B cell (primary cell): ENCODE measurements at regions of chr2 and their contacts with region 1.

Region 1: DNA sequence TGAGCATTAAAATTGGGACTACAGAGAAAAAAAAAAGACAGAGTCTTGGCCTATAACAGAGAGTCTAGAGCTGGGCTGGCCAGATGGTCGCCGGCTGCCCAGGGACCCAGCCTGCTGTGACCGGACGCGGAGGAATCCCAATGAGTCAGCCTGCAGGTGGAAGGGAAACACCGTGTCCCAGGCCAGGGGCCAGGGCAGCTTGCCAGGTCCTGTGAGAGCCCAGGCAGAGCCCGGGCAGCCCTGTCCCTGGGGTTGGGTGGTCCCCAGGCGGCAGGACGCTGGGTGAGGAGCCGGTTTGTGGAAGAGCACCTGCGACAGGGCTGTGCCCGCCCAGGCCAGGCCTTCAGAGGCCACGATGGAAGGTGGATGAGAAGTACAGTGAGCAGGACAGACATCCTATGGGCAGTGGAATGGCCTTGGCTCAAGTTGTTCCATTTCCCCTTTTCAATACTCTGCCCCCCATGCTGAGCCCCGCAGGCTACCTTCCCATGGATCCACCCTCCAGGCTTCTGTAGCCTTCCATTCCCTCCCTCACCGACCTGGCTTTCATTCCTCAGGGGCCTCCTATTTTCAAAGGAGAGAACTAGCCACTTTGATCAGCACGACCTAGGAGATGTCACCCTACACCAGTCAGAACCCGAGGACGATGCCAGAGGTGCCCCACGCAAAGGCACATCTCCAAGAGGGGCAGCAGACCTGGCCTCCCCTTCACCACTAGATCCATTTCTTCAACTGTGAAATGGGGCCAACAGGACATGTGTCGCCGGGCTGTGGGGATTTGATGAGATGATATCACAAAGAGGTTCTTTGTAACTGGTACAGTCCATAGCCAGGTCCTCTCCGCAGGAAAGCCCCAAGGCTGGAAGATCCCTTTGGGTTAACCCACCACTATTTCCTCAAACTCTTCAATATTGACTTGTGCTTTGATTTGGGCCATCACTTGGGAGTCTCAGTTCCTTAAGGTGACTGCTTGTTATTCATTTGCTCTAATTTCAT is 87.5 kb downstream of the POLR1A start:
- DNase-seq: peak; percentile 37
- ATAC-seq: no peak
- H3K4me3 ChIP-seq: no peak overlapping the region
- H3K4me3 Mint-ChIP-seq: peak overlapping the region; percentile 29
- H3K27ac ChIP-seq: peak overlapping the region; percentile 80 to 87
- H3K27ac Mint-ChIP-seq: peak overlapping the region; percentile 92
- H3K4me1 ChIP-seq: peaks cover 49 to 53% of the 10 kb centered on the region in 2 donors
- H3K4me1 Mint-ChIP-seq: peaks cover 69% of the 10 kb centered on the region
- H3K27me3 ChIP-seq: no peaks in the 10 kb centered on the region
- H3K27me3 Mint-ChIP-seq: no peaks in the 10 kb centered on the region
- CTCF ChIP-seq: no peak

Region 2: DNA sequence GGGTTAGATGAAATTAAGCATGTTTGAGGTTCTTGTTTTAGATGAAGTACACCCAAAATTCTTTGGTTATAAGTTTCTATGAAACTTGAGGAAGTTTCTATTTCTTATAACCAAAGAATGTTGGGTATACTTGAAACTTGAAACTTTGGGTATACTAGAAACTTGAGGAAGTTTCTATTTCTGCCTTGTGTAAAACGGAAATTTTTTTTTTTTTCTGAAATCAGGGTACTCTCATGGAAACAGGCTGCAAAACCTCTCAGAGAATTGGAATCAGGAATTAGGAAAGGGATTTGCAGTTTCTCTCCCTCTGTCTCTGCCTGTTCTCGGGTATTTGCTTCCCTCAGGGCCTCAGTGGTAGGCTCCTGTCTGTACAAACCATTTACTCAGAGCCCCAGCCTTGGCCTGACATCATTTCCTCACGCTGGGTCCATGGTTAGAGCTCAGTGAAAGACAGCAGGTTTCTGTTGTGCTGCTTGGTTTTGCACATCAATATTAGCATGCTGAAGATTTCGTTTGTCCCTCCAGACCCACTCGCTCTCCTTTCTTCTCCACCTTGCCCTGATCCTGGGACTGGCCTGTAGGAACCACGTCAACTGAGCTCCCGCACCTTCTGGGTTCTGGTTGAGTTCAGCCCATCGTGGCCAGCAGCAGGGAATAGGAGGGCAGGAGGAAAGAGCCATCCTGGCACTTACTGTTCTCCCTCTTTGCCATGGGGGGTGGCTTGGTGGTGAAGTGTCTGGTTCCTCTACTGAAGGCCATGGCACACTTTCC is 19.0 kb before region 1 on chr2:
- CTCF ChIA-PET with region 1: interaction called, 3 read pairs
- POLR2A ChIA-PET with region 1: interaction called, 6 read pairs
- intact Hi-C with region 1: loop called (anchors 1 kb)
- DNase-seq: peak; percentile 64
- ATAC-seq: peak; percentile 73
- H3K4me3 ChIP-seq: peak overlapping the region in 3 of 5 experiments; percentile 16 to 52 (median 27)
- H3K4me3 Mint-ChIP-seq: peak overlapping the region; percentile 59
- H3K27ac ChIP-seq: peak overlapping the region; percentile 79 to 87
- H3K27ac Mint-ChIP-seq: peak overlapping the region; percentile 93
- H3K4me1 ChIP-seq: peaks cover 73 to 74% of the 10 kb centered on the region in 2 donors
- H3K4me1 Mint-ChIP-seq: peaks cover 78% of the 10 kb centered on the region
- H3K27me3 ChIP-seq: no peaks in the 10 kb centered on the region
- H3K27me3 Mint-ChIP-seq: no peaks in the 10 kb centered on the region
- CTCF ChIP-seq: no peak

Region 3: GRCh38 chr2:86072271-86072858 is 54.2 kb after region 1 on chr2:
- CTCF ChIA-PET with region 1: no interaction called
- POLR2A ChIA-PET with region 1: no interaction called
- intact Hi-C with region 1: loop called (anchors 5 kb)
- DNase-seq: peak; percentile 81
- ATAC-seq: peak; percentile 89
- H3K4me3 ChIP-seq: no peak overlapping the region
- H3K4me3 Mint-ChIP-seq: peak overlapping the region; percentile 49
- H3K27ac ChIP-seq: peak overlapping the region; percentile 79
- H3K27ac Mint-ChIP-seq: peak overlapping the region; percentile 94
- H3K4me1 ChIP-seq: peaks cover 20 to 34% of the 10 kb centered on the region in 2 donors
- H3K4me1 Mint-ChIP-seq: peaks cover 30% of the 10 kb centered on the region
- H3K27me3 ChIP-seq: no peaks in the 10 kb centered on the region
- H3K27me3 Mint-ChIP-seq: no peaks in the 10 kb centered on the region
- CTCF ChIP-seq: no peak